ENCODE measurements at regions of chr2 and their contacts with region 1.

Region 1: GRCh38 chr2:71000780-71001591 is 6.3 kb upstream of the TEX261 start:
- DNase-seq: peak; percentile 75
- H3K4me3 Mint-ChIP-seq: peak overlapping the region; percentile 54
- H3K27ac Mint-ChIP-seq: peak overlapping the region; percentile 37
- H3K4me1 Mint-ChIP-seq: peaks cover 27% of the 10 kb centered on the region
- H3K27me3 Mint-ChIP-seq: peaks cover 11% of the 10 kb centered on the region

Region 2: GRCh38 chr2:70964596-70965386 is 36.2 kb before region 1 on chr2:
- intact Hi-C with region 1: loop called (anchors 1 kb)
- DNase-seq: peak; percentile 73
- H3K4me3 Mint-ChIP-seq: peak overlapping the region; percentile 89
- H3K27ac Mint-ChIP-seq: no peak overlapping the region
- H3K4me1 Mint-ChIP-seq: peaks cover 9% of the 10 kb centered on the region
- H3K27me3 Mint-ChIP-seq: peaks cover 27% of the 10 kb centered on the region

Region 3: DNA sequence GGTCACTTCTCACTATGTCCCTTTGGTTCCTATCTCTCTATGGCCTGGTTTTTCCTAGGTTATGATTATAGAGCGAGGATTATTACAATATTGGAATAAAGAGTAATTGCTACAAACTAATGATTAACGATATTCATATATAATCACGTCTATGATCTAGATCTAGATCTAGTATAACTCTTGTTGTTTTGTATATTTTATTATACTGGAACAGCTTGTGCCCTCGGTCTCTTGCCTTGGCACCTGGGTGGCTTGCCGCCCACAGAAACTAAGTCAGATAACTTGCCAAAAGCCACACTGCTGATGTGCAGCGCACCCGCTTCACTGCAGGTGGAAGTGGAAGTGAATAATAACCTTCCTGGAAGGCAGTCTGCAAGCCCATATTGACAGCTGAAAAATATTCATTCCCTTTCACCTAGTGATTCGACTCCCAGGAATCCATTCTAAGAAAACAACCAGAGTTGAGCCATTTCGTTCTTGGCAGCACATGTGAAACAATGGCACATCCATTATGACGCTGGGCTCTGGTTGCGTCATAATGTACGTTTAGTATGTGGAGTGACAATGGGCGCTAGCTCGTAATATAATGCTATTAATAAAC is 23.3 kb before region 1 on chr2:
- intact Hi-C with region 1: loop called (anchors 1 kb)
- DNase-seq: no peak
- H3K4me3 Mint-ChIP-seq: peak overlapping the region; percentile 78
- H3K27ac Mint-ChIP-seq: no peak overlapping the region
- H3K4me1 Mint-ChIP-seq: peaks cover 18% of the 10 kb centered on the region
- H3K27me3 Mint-ChIP-seq: peaks cover under 1% of the 10 kb centered on the region

Region 4: DNA sequence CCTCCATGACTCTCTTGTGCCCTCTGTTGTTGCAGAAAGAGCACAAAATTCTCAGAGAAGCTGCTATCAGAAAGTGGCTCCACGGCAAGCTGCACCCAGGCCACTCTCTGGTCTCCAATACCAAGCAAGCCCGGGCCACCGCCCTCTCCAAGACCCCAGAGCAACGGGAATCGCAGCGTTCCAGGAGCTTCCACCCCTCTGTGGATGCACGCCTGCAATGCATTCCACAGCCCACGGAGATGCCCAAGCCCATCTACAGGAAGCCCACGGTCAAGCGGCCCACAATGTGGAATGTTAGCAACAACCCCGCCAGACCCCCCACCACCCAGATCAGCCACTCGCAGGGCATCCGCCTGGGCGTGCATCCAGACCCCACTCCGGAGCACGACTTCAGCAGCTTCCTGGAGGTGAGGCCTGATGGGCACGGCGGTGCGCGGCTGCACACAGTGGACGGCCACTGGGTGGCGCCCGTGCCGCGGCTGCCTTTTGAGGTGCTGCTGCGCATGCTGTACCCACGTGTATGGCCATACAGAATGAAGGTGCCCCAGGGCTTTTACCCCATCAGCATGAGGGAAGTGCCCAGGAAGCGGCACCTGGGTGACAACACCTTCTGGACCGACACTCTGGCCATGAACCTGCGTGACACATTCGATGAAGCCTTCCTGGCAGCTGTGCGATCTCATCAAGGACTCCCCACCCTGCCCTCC is 16.3 kb before region 1 on chr2:
- intact Hi-C with region 1: loop called (anchors 1 kb)
- DNase-seq: peak; percentile 73
- H3K4me3 Mint-ChIP-seq: no peak overlapping the region
- H3K27ac Mint-ChIP-seq: peak overlapping the region; percentile 2
- H3K4me1 Mint-ChIP-seq: peaks cover 7% of the 10 kb centered on the region
- H3K27me3 Mint-ChIP-seq: no peaks in the 10 kb centered on the region

Region 5: GRCh38 chr2:71068218-71069035 is 67.4 kb after region 1 on chr2 and contains the start of gene NAGK:
- intact Hi-C with region 1: no loop called
- DNase-seq: peak; percentile 98
- H3K4me3 Mint-ChIP-seq: peak within 1 kb of the TSS; percentile 93
- H3K27ac Mint-ChIP-seq: peak within 1 kb of the TSS; percentile 97
- H3K4me1 Mint-ChIP-seq: peaks cover 55% of the 10 kb centered on the region
- H3K27me3 Mint-ChIP-seq: no peaks in the 10 kb centered on the region
- total RNA-seq, gene NAGK: 75.2 and 83.2 TPM in 2 replicates

Measured in activated T-helper 1 cell treated with anti-CD3 and anti-CD28 coated beads, Interleukin-12 subunit alpha, Interleukin-12 subunit beta, Interleukin-2, Interleukin-4 antibody, amounts not matched to agents 30 ng/mL and 10 ng/mL and 1 ng/mL, durations not matched to agents 14 hours and 24 hours and 36 hours (primary cell).